ENCODE measurements at regions of chr13 and their contacts with region 1.

Region 1: DNA sequence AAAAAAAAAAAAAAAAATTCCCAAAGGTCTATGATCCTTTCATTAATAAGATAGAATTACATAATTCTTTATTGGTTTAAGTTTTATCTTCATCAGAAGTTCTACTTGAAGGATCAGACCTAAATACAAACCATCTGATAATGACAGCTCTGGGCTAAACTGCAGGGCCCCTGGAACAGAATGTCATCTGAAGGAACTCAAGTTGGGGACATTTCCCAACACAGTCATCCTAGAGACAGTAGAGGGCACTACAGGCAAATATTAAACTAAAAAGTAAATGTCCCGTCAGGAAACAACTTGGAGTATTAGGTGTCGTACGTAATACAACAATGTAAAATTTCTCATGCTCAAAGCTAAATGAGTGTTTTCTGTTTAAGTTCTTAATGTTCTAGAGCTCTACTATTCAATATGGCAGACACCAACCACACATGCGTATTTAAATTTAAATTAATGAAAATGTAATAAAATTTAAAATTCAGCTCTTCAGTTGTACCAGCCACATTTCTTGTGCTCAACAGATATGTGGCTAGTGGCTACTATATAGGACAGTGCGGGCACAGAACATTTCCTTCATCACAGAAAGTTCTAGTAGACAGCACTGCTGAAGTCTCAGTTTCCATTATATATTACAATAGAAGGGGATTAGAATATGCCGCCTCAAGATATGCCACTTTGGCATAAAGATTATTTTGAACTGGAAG is 21.8 kb upstream of the NAXD start:
- DNase-seq: no peak
- H3K4me3 ChIP-seq: no peak overlapping the region
- H3K27me3 ChIP-seq: 0 out of 2 replicates have a peak, but pooled peaks cover 4% of the 10 kb centered on the region
- CTCF ChIP-seq: peak; percentile 60

Region 2: DNA sequence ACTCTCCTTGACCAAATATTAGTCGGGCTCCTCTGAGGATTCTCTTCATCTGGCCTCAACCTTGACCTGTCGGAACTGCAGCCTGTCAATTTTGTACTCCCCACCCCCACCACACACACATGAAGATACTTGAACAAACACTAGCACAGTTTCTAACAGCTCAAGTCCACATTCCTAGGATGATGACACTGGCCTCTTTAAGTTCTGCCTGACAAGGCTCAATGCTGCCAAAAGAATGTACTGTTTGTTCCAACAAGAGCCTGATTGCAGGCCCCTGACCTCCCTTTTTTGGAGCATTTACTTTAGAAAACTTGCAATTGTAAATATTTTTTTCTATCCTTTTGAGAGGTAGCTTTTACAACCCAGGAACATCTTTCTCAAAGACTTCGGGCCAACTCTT is 638.0 kb before region 1 on chr13:
- CTCF ChIA-PET with region 1: no interaction called
- POLR2A ChIA-PET with region 1: no interaction called
- DNase-seq: no peak
- H3K4me3 ChIP-seq: no peak overlapping the region
- H3K27me3 ChIP-seq: no peaks in the 10 kb centered on the region
- CTCF ChIP-seq: no peak

Region 3: DNA sequence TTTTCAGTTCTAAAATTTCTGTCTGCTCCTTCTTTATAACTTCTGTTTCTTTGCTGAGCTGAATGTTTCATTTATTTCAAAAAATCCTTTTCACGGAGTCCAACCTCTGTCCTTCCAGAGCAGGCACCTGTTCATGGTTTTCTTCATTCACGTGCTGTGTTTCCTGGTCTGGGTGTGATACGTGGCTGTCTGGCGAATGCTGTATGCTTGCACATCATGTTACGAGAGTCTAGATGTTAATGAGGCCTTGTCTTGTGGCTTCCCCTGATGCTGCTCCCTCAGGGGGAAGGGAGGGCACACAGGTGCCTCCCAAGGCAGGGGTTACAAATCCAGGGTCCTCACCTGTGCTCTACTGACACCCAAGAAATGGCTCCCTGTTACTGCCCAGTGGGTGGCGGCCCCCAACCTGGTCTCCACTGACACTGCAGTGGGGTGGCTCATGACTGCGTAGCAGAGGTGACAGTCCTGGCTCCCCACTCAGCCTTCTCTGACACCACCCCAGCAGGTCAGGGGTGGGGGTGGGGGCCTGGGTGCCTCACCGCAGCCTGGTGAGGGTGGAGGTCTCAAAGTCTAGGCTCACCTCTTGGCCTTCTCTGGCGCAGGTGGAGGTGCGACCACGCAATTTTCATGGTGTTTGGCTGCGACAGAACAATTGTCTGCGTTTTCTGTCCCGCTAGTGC is 11.9 kb before region 1 on chr13:
- CTCF ChIA-PET with region 1: interaction called, 11 read pairs
- POLR2A ChIA-PET with region 1: no interaction called
- DNase-seq: no peak
- H3K4me3 ChIP-seq: no peak overlapping the region
- H3K27me3 ChIP-seq: peaks cover 3% of the 10 kb centered on the region; the same call in 1 of the 2 replicates
- CTCF ChIP-seq: no peak

Region 4: GRCh38 chr13:110610955-110611595 is 17.5 kb after region 1 on chr13:
- CTCF ChIA-PET with region 1: interaction called, 15 read pairs
- POLR2A ChIA-PET with region 1: no interaction called
- DNase-seq: no peak
- H3K4me3 ChIP-seq: no peak overlapping the region
- H3K27me3 ChIP-seq: no peaks in the 10 kb centered on the region
- CTCF ChIP-seq: no peak

Region 5: GRCh38 chr13:110812121-110812868 is 218.7 kb after region 1 on chr13:
- CTCF ChIA-PET with region 1: interaction called, 34 read pairs
- POLR2A ChIA-PET with region 1: no interaction called
- DNase-seq: no peak
- H3K4me3 ChIP-seq: no peak overlapping the region
- H3K27me3 ChIP-seq: peaks cover 12% of the 10 kb centered on the region
- CTCF ChIP-seq: peak; percentile 9; the same call in 1 of the 2 replicates

Region 6: GRCh38 chr13:110819203-110820014 is 225.8 kb after region 1 on chr13:
- CTCF ChIA-PET with region 1: interaction called, 34 read pairs
- POLR2A ChIA-PET with region 1: no interaction called
- DNase-seq: peak; percentile 9
- H3K4me3 ChIP-seq: no peak overlapping the region
- H3K27me3 ChIP-seq: peaks cover 1% of the 10 kb centered on the region; the same call in 1 of the 2 replicates
- CTCF ChIP-seq: peak; percentile 92

Measured in BJ (cell line).